Breast epithelium (tissue), 4 donors: ENCODE measurements at regions of chr19 and their contacts with region 1.

Region 1: GRCh38 chr19:2627319-2627829 is 75.1 kb downstream of the GNG7 start:
- DNase-seq: peak; percentile 68 to 88
- H3K4me3 ChIP-seq: no peak overlapping the region
- H3K27ac ChIP-seq: peak overlapping the region; percentile 86 to 92
- H3K4me1 ChIP-seq: peaks cover 0 to 5% of the 10 kb centered on the region in 2 donors
- H3K27me3 ChIP-seq: no peaks in the 10 kb centered on the region
- CTCF ChIP-seq: no peak
- POLR2A ChIP-seq: no peak

Region 2: GRCh38 chr19:1652471-1653299 is 974.7 kb before region 1 on chr19 and contains the start of gene TCF3:
- intact Hi-C with region 1: loop called (anchors 5 kb)
- DNase-seq: peak; percentile 98 to 99
- H3K4me3 ChIP-seq: peak within 1 kb of the TSS; percentile 82 to 98 (median 85)
- H3K27ac ChIP-seq: peak within 1 kb of the TSS; percentile 99 to 100
- H3K4me1 ChIP-seq: peaks cover 5% of the 10 kb centered on the region in 2 donors
- H3K27me3 ChIP-seq: no peaks in the 10 kb centered on the region
- CTCF ChIP-seq: peak in 1 of 3 donors; percentile 20
- POLR2A ChIP-seq: no peak
- total RNA-seq, gene TCF3: 38.6 to 45.3 (median 42.3) TPM

Region 3: GRCh38 chr19:2475702-2476450 is 151.5 kb before region 1 on chr19 and contains the start of gene GADD45B:
- intact Hi-C with region 1: loop called (anchors 5 kb)
- DNase-seq: peak; percentile 96 to 99
- H3K4me3 ChIP-seq: peak within 1 kb of the TSS; percentile 71 to 91 (median 79)
- H3K27ac ChIP-seq: peak within 1 kb of the TSS; percentile 93 to 94
- H3K4me1 ChIP-seq: peaks cover 0 to 11% of the 10 kb centered on the region in 2 donors
- H3K27me3 ChIP-seq: no peaks in the 10 kb centered on the region
- CTCF ChIP-seq: peak in 2 of 3 donors; percentile 25 to 44
- POLR2A ChIP-seq: peak; percentile 100
- total RNA-seq, gene GADD45B: 136 to 301 (median 172) TPM

Region 4: DNA sequence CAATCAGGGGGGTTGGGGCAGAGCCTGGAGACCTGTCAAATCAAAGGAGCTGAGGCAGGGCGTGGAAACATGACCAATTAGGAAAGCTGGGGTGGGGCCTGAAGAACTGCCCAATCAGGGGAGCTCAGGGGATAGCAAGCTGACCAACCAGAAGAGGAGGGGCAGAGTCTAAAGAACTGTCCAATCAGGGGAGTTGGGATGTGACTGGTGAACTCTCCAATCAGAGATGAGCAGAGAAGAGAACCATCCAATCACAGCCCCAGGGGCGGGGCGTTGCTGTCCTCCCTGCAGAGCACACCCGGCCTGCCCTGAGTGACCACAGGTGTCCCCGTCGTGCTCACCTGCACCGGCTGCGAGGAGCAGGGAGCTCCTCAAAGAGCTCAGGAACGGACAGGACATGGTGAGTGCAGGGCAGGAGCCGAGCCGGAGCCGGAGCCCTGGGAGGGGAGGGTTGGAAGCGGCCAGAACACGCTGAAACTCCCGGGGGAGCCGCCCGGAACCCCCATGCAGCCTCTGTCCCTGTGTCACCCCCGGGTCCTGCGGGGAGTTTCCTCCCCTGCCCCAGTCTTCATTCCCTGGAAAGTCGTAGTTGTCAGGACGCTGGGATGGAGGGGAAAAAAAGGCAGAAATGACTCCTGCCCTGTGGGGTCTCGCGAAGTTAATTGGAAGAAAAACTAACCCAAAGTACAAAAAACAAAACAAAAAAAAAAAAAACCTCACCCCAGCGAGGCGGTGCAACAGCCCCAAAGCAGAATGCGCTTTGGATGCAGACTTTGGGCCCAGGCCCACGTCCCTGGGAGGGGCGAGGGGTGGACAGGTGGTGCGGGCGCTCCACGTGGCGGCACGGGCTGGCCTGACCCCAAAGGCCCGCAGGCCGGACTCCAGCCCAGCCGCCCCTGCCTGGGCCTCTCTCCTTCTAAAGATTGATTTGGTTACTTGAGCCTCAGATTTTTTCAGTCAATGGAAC is 239.9 kb after region 1 on chr19 and contains the start of gene ZNF556:
- intact Hi-C with region 1: no loop called
- DNase-seq: no peak
- H3K4me3 ChIP-seq: peak within 1 kb of the TSS in 2 of 3 donors; percentile 25 to 37
- H3K27ac ChIP-seq: no peak within 1 kb of the TSS
- H3K4me1 ChIP-seq: no peaks in the 10 kb centered on the region
- H3K27me3 ChIP-seq: no peaks in the 10 kb centered on the region
- CTCF ChIP-seq: no peak
- POLR2A ChIP-seq: no peak
- total RNA-seq, gene ZNF556: 0.15 to 0.33 TPM in 2 of 3 donors, not detected in the other